IMR-90 (cell line): ENCODE measurements at regions of chr5 and their contacts with region 1.

Region 1: DNA sequence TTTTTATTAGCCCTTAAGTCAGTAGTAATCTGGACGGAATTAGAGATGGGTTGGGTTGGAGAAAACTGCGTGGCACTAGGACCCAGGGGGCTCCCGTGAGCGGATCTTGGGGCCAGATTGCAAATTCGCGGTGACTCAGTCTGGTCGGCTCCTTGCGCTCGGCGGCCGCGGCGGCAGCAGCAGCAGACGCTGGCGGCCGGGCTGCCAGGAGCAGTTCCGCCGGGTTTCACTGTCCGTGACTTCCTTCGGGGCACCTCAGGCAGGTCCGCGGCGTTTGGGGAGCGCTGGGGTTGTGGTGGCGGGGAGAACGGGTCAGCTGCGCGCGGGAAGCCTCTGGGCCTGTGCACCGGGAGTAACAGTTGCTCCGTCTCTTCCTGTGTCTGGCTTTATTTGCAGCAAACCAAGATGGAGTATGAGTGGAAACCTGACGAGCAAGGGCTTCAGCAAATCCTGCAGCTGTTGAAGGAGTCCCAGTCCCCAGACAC is 31.6 kb downstream of the TNPO1 start:
- DNase-seq: peak; percentile 93
- ATAC-seq: peak; percentile 81
- H3K4me3 ChIP-seq: peak overlapping the region; percentile 76
- H3K27ac ChIP-seq: peak overlapping the region; percentile 98
- H3K4me1 ChIP-seq: peaks cover 6% of the 10 kb centered on the region
- H3K27me3 ChIP-seq: no peaks in the 10 kb centered on the region
- CTCF ChIP-seq: no peak
- POLR2A ChIP-seq: peak; percentile 94
- RAD21 ChIP-seq: peak; percentile 19; the same call in 1 of the 2 replicates

Region 2: GRCh38 chr5:71986101-71986500 is 861.9 kb before region 1 on chr5:
- CTCF ChIA-PET with region 1: no interaction called
- POLR2A ChIA-PET with region 1: no interaction called
- dilution Hi-C with region 1: no loop called
- in situ Hi-C with region 1: no loop called
- intact Hi-C with region 1: no loop called
- DNase-seq: no peak
- ATAC-seq: no peak
- H3K4me3 ChIP-seq: no peak overlapping the region
- H3K27ac ChIP-seq: no peak overlapping the region
- H3K4me1 ChIP-seq: no peaks in the 10 kb centered on the region
- H3K27me3 ChIP-seq: peaks cover 8% of the 10 kb centered on the region
- CTCF ChIP-seq: no peak
- POLR2A ChIP-seq: no peak
- RAD21 ChIP-seq: no peak

Region 3: DNA sequence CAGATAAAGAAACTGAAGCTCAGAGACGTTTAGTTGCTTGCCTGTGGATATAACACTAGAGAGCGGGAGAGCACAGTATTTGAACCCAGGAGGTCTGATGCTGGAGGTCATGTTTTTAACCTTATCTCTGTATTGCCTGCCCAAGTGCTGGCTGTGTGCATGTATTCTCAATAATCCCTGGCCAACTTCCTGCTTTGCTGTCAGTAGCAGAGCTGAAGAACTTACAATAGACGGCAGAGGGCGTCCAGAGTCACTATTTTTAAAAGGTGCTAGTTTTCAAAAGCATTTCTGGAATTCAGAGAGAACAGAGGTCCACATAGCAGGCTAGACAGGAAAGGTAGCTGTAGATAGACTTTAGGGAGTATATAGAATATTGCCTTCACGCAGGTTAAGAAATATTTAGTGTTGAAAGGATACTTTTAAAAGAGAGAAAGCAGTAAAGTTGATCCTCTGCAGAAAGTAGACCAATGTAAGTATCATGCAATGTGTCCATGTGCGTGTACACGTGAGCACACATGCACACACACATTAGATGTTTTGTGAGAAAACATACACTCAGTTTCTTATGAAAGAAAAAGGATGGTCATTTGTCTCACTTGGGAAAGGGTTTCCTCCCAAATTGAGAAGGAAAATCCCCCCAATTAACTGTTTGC is 481.6 kb before region 1 on chr5:
- CTCF ChIA-PET with region 1: no interaction called
- POLR2A ChIA-PET with region 1: no interaction called
- dilution Hi-C with region 1: no loop called
- in situ Hi-C with region 1: no loop called
- intact Hi-C with region 1: loop called (anchors 10 kb)
- DNase-seq: peak; percentile 80
- ATAC-seq: peak; percentile 78
- H3K4me3 ChIP-seq: no peak overlapping the region
- H3K27ac ChIP-seq: no peak overlapping the region
- H3K4me1 ChIP-seq: peaks cover 10% of the 10 kb centered on the region
- H3K27me3 ChIP-seq: no peaks in the 10 kb centered on the region
- CTCF ChIP-seq: peak; percentile 81
- POLR2A ChIP-seq: no peak
- RAD21 ChIP-seq: peak; percentile 80

Region 4: GRCh38 chr5:72600391-72600981 is 247.5 kb before region 1 on chr5:
- CTCF ChIA-PET with region 1: no interaction called
- POLR2A ChIA-PET with region 1: no interaction called
- dilution Hi-C with region 1: no loop called
- in situ Hi-C with region 1: no loop called
- intact Hi-C with region 1: loop called (anchors 10 kb)
- DNase-seq: peak; percentile 95
- ATAC-seq: peak; percentile 71
- H3K4me3 ChIP-seq: no peak overlapping the region
- H3K27ac ChIP-seq: peak overlapping the region; percentile 91; the same call in 1 of the 2 replicates
- H3K4me1 ChIP-seq: peaks cover 30% of the 10 kb centered on the region
- H3K27me3 ChIP-seq: no peaks in the 10 kb centered on the region
- CTCF ChIP-seq: no peak
- POLR2A ChIP-seq: no peak; the same call in 1 of the 2 replicates
- RAD21 ChIP-seq: no peak